Activated CD4-positive, alpha-beta T cell treated with anti-CD3 and anti-CD28 coated beads for 36 hours (primary cell): ENCODE measurements at regions of chr14 and their contacts with region 1.

Region 1: GRCh38 chr14:89430391-89431236 is 13.6 kb upstream of the FOXN3 start:
- DNase-seq: peak; percentile 75
- ATAC-seq: peak; percentile 89
- H3K4me3 Mint-ChIP-seq: peak overlapping the region; percentile 71
- H3K27ac Mint-ChIP-seq: peak overlapping the region; percentile 94
- H3K4me1 Mint-ChIP-seq: peaks cover 70% of the 10 kb centered on the region
- H3K27me3 Mint-ChIP-seq: no peaks in the 10 kb centered on the region

Region 2: GRCh38 chr14:89365061-89365801 is 65.4 kb before region 1 on chr14:
- CTCF ChIA-PET with region 1: no interaction called
- POLR2A ChIA-PET with region 1: no interaction called
- intact Hi-C with region 1: loop called in 1 of 2 experiments (anchors 1 kb)
- DNase-seq: peak; percentile 72
- ATAC-seq: peak; percentile 92
- H3K4me3 Mint-ChIP-seq: peak overlapping the region; percentile 70
- H3K27ac Mint-ChIP-seq: peak overlapping the region; percentile 97
- H3K4me1 Mint-ChIP-seq: peaks cover 62% of the 10 kb centered on the region
- H3K27me3 Mint-ChIP-seq: no peaks in the 10 kb centered on the region

Region 3: DNA sequence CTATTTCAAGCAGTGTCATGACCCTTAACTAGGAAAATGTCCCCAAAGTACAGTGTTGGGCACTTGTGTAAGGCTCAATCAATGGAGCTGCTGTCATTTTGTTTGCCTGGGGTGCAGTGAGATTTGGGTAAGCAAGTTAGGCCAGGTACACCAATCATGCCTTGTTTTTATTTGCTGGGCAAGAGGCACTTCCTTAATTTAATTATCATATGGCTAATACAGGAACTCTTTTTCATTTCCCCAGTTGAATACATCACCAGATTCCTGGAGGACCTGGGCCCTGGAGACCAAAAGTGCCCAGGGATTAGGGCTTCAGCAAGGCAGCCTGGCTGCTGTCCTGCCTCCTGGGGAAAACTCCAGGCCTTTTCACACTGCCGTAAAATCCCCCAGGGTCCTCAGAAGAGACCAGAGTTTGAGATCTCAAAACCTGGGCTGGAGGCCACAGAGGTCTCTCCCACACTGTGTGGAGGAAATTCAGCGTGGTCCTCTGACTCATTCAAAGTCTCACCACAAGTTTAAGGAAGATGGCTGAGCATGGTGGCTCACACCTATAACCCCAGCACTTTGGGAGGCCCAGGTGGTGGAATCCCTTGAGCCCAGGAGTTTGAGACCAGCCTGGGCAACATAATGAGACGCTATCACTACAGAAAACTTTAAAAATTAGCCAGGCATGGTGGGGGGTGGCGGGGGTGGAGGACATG is 14.8 kb after region 1 on chr14:
- CTCF ChIA-PET with region 1: interaction called, 3 read pairs
- POLR2A ChIA-PET with region 1: interaction called, 3 read pairs
- intact Hi-C with region 1: loop called (anchors 1 kb)
- DNase-seq: peak; percentile 61
- ATAC-seq: peak; percentile 88
- H3K4me3 Mint-ChIP-seq: no peak overlapping the region
- H3K27ac Mint-ChIP-seq: peak overlapping the region; percentile 89
- H3K4me1 Mint-ChIP-seq: peaks cover 67% of the 10 kb centered on the region
- H3K27me3 Mint-ChIP-seq: no peaks in the 10 kb centered on the region

Region 4: GRCh38 chr14:89509891-89510290 is 79.3 kb after region 1 on chr14:
- CTCF ChIA-PET with region 1: no interaction called
- POLR2A ChIA-PET with region 1: interaction called, 3 read pairs
- intact Hi-C with region 1: loop called (anchors 1 kb)
- DNase-seq: no peak
- ATAC-seq: no peak
- H3K4me3 Mint-ChIP-seq: peak overlapping the region; percentile 65
- H3K27ac Mint-ChIP-seq: peak overlapping the region; percentile 96
- H3K4me1 Mint-ChIP-seq: peaks cover 74% of the 10 kb centered on the region
- H3K27me3 Mint-ChIP-seq: no peaks in the 10 kb centered on the region

Region 5: DNA sequence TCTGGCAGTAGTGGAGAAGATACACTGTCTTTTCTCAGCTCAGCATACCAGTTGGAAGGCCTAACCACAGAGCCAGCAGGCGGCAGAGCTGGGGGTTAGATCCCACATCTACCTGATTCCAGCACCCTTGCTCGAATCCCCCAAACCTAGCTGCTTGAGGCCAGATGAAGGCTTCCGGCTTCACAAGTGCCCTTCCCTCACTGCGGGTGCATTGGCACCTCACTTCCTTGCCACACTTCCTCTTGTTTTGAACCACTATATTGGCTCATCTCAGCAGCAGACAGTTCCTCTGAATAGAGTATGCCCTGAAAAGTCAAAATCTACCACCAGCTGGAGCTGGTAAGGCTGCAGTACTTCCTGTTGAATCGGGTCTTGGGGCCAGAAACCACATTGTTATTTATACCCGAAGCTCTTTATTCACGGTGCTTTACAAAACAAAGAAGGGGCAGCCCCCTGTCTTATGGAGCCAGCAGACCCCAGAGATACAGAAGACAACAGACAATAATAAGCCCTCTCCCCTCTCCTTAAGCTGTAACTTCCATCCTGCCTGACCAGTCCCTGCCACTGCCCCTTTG is 290.2 kb after region 1 on chr14:
- CTCF ChIA-PET with region 1: no interaction called
- POLR2A ChIA-PET with region 1: no interaction called
- intact Hi-C with region 1: loop called in 1 of 2 experiments (anchors 1 kb)
- DNase-seq: peak; percentile 72
- ATAC-seq: peak; percentile 82
- H3K4me3 Mint-ChIP-seq: peak overlapping the region; percentile 37
- H3K27ac Mint-ChIP-seq: peak overlapping the region; percentile 96
- H3K4me1 Mint-ChIP-seq: peaks cover 74% of the 10 kb centered on the region
- H3K27me3 Mint-ChIP-seq: no peaks in the 10 kb centered on the region